SK-N-SH (cell line): ENCODE measurements at regions of chr9 and their contacts with region 1.

Region 1: DNA sequence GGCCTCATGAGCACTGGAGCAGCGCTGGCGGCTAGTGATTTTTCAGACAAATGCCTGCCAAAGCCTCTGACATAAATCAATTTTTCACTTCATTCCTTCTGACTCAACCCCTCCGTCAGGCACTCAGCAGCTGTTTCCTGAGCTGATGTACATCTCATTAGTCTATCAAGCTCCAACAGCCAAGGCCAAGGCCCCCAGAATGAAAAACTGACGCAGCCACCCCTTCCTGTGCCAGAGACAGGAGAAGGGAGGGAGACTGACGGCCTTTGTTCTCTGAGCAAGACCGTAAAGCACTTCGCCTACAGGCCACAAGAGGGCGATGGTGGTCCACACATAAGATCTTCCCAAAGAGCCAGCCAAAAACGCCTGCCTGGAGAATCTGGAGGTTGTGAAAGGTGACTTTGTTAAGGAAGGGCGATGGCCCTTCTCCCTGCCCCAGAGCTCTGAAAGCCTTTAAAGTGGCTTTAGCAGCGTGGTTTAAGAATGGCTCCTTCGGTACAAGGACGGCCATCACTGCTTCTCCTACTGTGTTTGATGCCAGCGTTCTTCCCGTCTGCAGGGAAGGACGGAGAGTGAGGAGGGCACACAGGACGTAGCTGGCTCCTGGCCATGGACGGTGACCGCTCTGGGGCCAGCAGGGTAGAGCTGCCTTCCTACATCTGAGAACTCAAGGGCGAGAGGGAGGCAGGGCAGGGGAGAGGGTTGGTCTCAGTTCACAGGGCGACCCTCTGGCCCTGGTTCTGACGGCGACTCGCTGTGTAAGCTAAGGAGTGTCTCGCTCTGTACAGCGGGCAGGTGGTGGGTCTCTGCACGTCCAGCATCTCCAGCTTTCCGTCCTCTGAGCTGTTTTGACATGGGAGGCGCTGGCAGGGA is 37.0 kb downstream of the ALG2 start:
- DNase-seq: peak; percentile 77
- H3K4me3 ChIP-seq: peak overlapping the region in 1 of 2 experiments; percentile 20; a peak in 1 of 4 replicates
- H3K27ac ChIP-seq: peak overlapping the region; percentile 2 to 66; a peak in 3 of 4 replicates
- H3K4me1 ChIP-seq: peaks cover 3 to 29% of the 10 kb centered on the region in 2 experiments; a peak in 1 of 4 replicates
- H3K27me3 ChIP-seq: no peaks in the 10 kb centered on the region
- CTCF ChIP-seq: peak; percentile 94
- EP300 ChIP-seq: no peak
- RAD21 ChIP-seq: peak; percentile 96

Region 2: GRCh38 chr9:99023831-99024230 is 160.9 kb before region 1 on chr9:
- CTCF ChIA-PET with region 1: no interaction called
- POLR2A ChIA-PET with region 1: no interaction called
- DNase-seq: peak; percentile 24
- H3K4me3 ChIP-seq: no peak overlapping the region
- H3K27ac ChIP-seq: no peak overlapping the region
- H3K4me1 ChIP-seq: peaks cover 0 to 13% of the 10 kb centered on the region in 2 experiments; a peak in 1 of 4 replicates
- H3K27me3 ChIP-seq: no peaks in the 10 kb centered on the region
- CTCF ChIP-seq: no peak
- EP300 ChIP-seq: no peak
- RAD21 ChIP-seq: no peak

Region 3: DNA sequence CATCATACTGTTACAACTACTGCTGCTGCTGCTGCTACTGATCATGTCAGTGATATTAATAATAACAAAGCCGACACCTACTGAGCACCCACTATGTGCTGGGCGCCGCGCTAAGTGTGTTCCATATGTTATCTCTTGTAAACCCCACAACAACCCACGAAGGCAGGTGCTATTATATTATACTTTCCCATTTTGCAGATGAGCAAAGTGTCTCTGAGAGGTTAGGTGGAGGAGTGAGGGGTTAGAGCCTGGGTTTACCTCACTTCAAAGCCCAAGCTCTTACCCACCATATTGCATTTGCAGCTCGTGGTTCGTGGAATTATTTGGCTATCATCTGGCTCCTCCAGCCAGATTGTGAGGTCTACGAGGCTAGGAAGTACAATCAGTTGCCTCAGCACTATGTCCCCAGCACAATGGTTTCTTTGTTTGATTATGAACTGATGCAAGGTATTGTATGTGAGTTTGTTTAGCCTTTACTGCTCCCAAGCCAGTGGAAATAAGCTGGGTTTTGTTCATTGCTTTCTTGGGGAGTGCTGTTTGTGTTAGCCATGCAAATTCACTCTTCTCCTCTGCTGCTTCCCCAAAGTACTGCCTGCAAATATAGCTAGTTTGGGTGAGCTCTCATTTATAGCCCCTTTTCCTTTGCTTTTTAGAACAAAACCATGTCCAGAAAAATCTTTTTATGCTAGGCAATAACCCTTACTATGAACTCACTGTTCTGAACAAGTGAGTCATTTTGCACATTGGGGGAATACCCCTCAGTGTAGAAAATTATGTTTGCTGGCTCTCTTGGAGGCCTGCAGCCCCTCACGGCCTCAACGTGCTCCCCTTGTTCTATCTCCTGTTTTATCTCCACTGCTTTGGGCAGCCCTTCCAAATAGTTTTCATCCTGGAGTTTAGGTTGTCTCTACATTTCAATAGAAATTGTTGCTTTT is 10.9 kb before region 1 on chr9:
- CTCF ChIA-PET with region 1: interaction called, 54 read pairs
- POLR2A ChIA-PET with region 1: interaction called, 4 read pairs
- DNase-seq: no peak
- H3K4me3 ChIP-seq: no peak overlapping the region
- H3K27ac ChIP-seq: no peak overlapping the region
- H3K4me1 ChIP-seq: peaks cover 0 to 48% of the 10 kb centered on the region in 2 experiments; a peak in 2 of 4 replicates
- H3K27me3 ChIP-seq: no peaks in the 10 kb centered on the region
- CTCF ChIP-seq: no peak
- EP300 ChIP-seq: no peak
- RAD21 ChIP-seq: no peak

Region 4: DNA sequence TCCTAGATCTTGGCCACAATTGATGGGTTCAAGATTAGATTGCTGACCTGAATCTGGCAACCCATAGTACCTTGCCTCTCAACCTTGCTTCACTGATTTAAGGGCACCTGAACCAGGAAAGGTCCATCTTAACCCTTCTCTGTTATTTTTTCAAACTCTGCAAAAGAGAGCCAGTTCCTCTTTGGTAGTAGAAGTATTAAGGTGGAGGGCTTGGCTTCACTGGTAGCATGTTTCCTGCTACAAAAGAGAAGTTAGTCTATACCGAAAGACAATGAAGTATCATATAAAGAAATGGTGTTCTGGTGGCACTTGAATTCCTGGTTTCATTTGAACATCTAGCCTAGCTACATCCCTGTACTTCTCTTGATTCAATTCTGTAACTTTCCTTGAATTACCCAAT is 28.5 kb after region 1 on chr9:
- CTCF ChIA-PET with region 1: interaction called, 14 read pairs
- POLR2A ChIA-PET with region 1: no interaction called
- DNase-seq: no peak
- H3K4me3 ChIP-seq: no peak overlapping the region
- H3K27ac ChIP-seq: no peak overlapping the region
- H3K4me1 ChIP-seq: no peaks in the 10 kb centered on the region
- H3K27me3 ChIP-seq: no peaks in the 10 kb centered on the region
- CTCF ChIP-seq: no peak
- EP300 ChIP-seq: no peak
- RAD21 ChIP-seq: no peak

Region 5: GRCh38 chr9:99231711-99232110 is 47.0 kb after region 1 on chr9:
- CTCF ChIA-PET with region 1: interaction called, 10 read pairs
- POLR2A ChIA-PET with region 1: no interaction called
- DNase-seq: peak; percentile 38
- H3K4me3 ChIP-seq: no peak overlapping the region
- H3K27ac ChIP-seq: no peak overlapping the region
- H3K4me1 ChIP-seq: no peaks in the 10 kb centered on the region
- H3K27me3 ChIP-seq: no peaks in the 10 kb centered on the region
- CTCF ChIP-seq: peak; percentile 66
- EP300 ChIP-seq: no peak
- RAD21 ChIP-seq: peak; percentile 64

Region 6: DNA sequence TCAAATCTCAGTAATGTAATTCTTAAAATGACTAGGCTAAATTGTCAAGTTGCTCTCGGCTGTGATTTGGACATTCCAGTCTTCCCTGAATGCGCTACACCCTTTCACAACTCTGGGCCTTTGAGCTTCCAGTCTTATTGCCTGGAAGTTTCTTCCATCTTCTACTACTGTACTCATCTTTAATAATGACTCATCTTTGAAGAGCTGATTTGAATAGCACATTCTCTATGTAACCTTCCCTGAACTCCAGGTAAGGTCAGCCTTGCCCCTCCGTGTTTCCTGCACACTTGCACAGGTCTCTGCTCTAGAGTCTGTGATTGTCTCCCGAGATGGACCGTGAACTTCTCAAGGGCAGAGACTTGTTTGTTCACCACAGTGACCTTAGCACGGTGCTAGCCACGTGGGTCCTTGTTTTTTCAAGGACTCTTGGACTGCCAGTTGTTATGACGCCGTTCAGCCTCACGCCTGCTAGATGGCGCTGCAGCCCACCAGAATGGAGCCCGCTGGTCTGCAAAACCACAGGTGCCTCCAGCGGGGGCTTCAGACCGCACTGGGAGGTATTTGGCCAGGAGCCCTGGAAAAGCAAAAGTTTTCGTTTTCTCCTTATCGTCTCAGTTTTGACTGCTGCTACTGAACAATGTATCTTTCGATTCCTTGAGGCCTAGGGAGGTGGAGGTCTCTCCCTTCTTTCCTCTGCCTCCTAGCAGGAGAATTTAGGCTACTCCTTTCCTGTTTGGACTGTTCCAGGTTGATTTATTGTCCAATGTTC is 81.7 kb after region 1 on chr9:
- CTCF ChIA-PET with region 1: interaction called, 11 read pairs
- POLR2A ChIA-PET with region 1: no interaction called
- DNase-seq: peak; percentile 74
- H3K4me3 ChIP-seq: no peak overlapping the region; a peak in 1 of 4 replicates
- H3K27ac ChIP-seq: no peak overlapping the region
- H3K4me1 ChIP-seq: peaks cover 0 to 3% of the 10 kb centered on the region in 2 experiments; a peak in 1 of 4 replicates
- H3K27me3 ChIP-seq: no peaks in the 10 kb centered on the region
- CTCF ChIP-seq: peak; percentile 93
- EP300 ChIP-seq: no peak
- RAD21 ChIP-seq: peak; percentile 94

Region 7: GRCh38 chr9:99322294-99322693 is 137.6 kb after region 1 on chr9:
- CTCF ChIA-PET with region 1: no interaction called
- POLR2A ChIA-PET with region 1: no interaction called
- DNase-seq: no peak
- H3K4me3 ChIP-seq: no peak overlapping the region
- H3K27ac ChIP-seq: no peak overlapping the region
- H3K4me1 ChIP-seq: peaks cover 0 to 2% of the 10 kb centered on the region in 2 experiments; a peak in 1 of 4 replicates
- H3K27me3 ChIP-seq: no peaks in the 10 kb centered on the region; the same call in 1 of the 2 replicates
- CTCF ChIP-seq: no peak
- EP300 ChIP-seq: no peak
- RAD21 ChIP-seq: no peak